Endothelial cell of umbilical vein (primary cell): ENCODE measurements at regions of chr7 and their contacts with region 1.

Region 1: GRCh38 chr7:105769901-105770628 is 106.3 kb downstream of the ATXN7L1 start:
- DNase-seq: peak; percentile 16
- H3K4me3 ChIP-seq: no peak overlapping the region
- H3K27ac ChIP-seq: no peak overlapping the region
- H3K4me1 ChIP-seq: peaks cover 7% of the 10 kb centered on the region
- H3K27me3 ChIP-seq: no peaks in the 10 kb centered on the region
- CTCF ChIP-seq: no peak
- POLR2A ChIP-seq: no peak

Region 2: DNA sequence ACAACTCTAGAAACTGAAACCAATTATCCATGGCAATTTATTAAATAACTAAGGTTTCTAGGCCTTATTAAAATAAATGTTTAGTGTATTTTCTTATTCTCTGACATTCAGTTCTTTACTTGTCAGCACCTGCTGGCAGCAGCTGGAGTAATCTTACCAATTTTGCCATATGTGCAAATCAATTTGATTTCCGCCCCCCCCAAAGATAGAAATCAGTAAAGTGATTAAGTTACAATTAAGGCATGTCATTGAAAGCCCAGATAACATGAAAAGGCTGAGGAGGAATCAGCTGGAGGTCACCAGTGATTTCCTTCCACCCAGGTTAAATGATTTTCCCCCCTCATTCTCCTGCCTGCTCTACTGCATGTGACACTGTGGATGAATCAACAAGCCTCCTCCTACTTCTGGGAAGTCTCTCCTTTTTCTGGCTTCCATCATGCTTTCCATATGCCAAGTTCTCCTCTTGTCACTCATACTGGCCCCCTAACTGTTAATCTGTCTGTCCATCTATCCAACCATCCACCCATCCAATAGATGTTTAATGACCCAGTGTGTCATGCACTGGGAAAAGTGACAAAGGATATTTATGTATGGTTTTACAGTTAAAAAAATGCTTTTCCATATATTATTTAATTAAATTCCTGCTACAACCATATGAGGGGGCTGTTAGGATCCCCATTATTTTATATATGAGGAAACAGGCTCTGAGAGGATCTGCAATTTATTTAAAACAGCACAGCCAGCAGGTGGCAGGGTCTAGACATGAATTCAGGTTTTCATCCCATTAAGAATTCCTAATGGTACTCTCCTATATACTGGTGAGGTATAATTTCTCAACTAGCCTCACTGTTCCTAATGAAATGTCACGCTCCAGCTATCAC is 10.2 kb before region 1 on chr7:
- CTCF ChIA-PET with region 1: interaction called, 13 read pairs
- POLR2A ChIA-PET with region 1: no interaction called
- dilution Hi-C with region 1: no loop called
- intact Hi-C with region 1: no loop called
- DNase-seq: peak; percentile 64
- H3K4me3 ChIP-seq: no peak overlapping the region
- H3K27ac ChIP-seq: no peak overlapping the region
- H3K4me1 ChIP-seq: no peaks in the 10 kb centered on the region
- H3K27me3 ChIP-seq: no peaks in the 10 kb centered on the region
- CTCF ChIP-seq: peak; percentile 33 to 43
- POLR2A ChIP-seq: no peak

Region 3: DNA sequence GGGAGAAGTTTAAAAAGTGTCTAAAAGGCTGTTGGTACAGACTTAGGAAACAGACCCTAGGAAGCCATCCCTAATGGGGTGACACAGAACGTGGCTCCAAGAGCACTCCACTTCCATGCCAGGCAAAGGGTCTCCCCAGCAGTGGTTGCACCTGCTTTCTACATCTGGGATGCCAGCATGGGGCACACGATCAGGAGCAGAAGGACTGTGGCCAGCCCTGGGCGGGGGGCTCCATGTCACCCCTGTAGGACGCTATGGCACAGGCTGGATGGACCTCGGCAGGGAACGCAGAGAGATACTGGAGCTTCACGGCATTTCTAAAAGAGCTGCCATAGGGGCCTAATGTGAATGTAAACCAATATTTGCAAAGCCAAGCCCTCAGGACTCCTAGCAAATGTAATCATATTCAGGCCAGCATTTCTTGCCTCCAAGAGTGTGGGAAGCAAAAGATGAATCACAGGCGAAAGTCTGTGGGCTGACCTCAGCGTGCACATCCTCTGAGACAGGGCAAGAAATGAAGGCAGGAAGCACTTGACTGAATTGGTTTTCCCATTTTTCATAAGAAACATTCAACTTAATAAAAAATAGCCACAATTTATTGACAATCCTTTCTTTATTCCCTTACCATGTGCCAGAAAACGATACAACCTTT is 12.5 kb after region 1 on chr7:
- CTCF ChIA-PET with region 1: interaction called, 11 read pairs
- POLR2A ChIA-PET with region 1: no interaction called
- dilution Hi-C with region 1: no loop called
- intact Hi-C with region 1: no loop called
- DNase-seq: peak; percentile 62
- H3K4me3 ChIP-seq: no peak overlapping the region
- H3K27ac ChIP-seq: no peak overlapping the region
- H3K4me1 ChIP-seq: peaks cover 12% of the 10 kb centered on the region
- H3K27me3 ChIP-seq: no peaks in the 10 kb centered on the region
- CTCF ChIP-seq: no peak
- POLR2A ChIP-seq: no peak

Region 4: DNA sequence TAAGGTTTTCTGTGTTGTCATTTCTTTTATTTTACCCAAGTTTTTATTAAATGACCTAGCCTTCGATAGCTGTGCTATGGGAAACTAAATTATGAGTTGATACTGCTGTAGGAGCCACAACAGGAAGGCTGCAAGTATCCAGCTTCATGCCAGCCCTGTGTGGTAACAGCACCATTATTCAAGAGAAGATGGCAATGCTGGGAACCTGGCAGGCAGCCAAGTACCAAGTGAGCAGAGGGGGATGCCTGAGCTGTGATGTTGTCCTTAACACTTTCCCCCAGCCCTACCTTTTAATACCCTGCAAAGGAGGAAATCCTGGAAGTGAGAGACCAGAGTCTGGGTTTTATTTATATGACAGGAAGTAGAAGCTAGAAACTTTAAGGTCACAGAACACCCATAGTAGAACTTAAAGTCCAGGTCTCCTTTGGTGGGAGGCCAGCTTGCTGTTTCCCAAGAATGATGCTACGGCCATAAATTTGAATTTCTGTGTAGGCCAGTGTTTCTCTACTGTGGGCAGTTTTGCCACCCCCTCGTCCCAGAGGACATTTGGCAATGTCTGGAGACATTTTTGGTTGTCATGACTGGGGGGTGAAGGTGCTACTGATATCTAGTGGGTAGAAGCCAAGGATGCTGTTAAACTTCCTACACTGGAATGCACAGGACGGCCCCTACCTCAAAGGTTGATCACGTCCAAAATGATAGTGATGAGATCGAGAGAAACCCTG is 115.5 kb after region 1 on chr7:
- CTCF ChIA-PET with region 1: interaction called, 7 read pairs
- POLR2A ChIA-PET with region 1: no interaction called
- dilution Hi-C with region 1: no loop called
- intact Hi-C with region 1: loop called (anchors 5 kb)
- DNase-seq: peak; percentile 60
- H3K4me3 ChIP-seq: no peak overlapping the region
- H3K27ac ChIP-seq: no peak overlapping the region
- H3K4me1 ChIP-seq: no peaks in the 10 kb centered on the region
- H3K27me3 ChIP-seq: no peaks in the 10 kb centered on the region
- CTCF ChIP-seq: no peak
- POLR2A ChIP-seq: no peak